Activated naive CD4-positive, alpha-beta T cell treated with anti-CD3 and anti-CD28 coated beads, Interleukin-2, amount 10 ng/mL, durations not matched to agents 7 days and 5 days (primary cell): ENCODE measurements at regions of chr1 and their contacts with region 1.

Region 1: DNA sequence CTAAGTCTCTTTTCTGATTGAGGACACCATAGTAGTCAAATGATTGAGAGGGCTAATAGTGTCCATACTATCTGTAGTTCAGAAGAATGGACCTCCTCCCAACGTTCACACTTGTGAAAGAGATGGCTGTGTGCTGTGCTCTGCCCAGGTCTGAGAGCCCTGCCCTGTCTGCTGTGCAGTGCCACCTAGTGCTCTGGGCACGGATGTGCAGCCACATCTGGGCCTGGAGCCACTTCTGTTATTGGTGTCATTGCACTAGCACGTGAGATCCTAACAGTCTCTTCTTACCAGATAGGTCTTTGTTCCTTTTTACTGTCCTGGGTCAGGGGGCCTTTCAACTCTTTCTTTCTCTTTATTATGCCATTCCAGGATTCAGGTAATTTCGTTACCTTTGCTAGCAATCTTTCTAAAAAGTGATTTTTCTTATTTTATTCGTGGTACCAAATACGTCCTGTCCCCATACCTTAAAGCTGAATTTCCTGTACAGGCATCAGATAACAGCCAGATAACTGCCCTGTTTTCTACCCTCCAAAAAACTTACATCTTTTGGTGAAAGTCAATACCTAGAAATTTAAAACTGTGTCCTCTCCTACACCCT is 21.7 kb downstream of the INTS3 start:
- DNase-seq: peak; percentile 86
- H3K4me3 Mint-ChIP-seq: no peak overlapping the region
- H3K27ac Mint-ChIP-seq: no peak overlapping the region
- H3K4me1 Mint-ChIP-seq: peaks cover 5% of the 10 kb centered on the region
- H3K27me3 Mint-ChIP-seq: no peaks in the 10 kb centered on the region

Region 2: DNA sequence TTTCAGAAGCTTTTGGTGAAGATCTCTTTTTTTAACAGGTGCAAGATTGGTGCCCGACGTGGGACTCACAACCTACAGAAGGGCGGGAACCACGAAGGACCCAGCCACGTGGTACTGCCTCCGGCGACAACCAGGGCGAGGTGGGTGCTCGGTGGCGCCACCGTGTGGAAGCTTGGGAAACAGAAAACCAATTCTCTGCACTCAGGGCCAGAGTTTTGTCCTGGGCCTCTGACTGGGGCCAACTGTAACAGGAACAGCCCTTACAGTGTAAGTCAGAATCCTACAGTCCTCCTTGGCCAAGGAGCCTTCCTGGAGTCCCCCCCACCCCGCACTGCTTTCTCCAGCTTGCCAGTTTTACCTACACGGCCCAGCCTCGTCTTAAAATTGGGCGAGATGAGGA is 344.7 kb before region 1 on chr1:
- CTCF ChIA-PET with region 1: no interaction called
- DNase-seq: peak; percentile 65
- H3K4me3 Mint-ChIP-seq: no peak overlapping the region
- H3K27ac Mint-ChIP-seq: no peak overlapping the region
- H3K4me1 Mint-ChIP-seq: peaks cover 16% of the 10 kb centered on the region
- H3K27me3 Mint-ChIP-seq: peaks cover 21% of the 10 kb centered on the region

Region 3: GRCh38 chr1:153677718-153678505 is 71.6 kb before region 1 on chr1:
- CTCF ChIA-PET with region 1: interaction called, 27 read pairs
- DNase-seq: peak; percentile 66
- H3K4me3 Mint-ChIP-seq: peak overlapping the region; percentile 78
- H3K27ac Mint-ChIP-seq: no peak overlapping the region
- H3K4me1 Mint-ChIP-seq: peaks cover 27% of the 10 kb centered on the region
- H3K27me3 Mint-ChIP-seq: peaks cover 59% of the 10 kb centered on the region

Region 4: GRCh38 chr1:153783233-153784190 is 34.0 kb after region 1 on chr1:
- CTCF ChIA-PET with region 1: no interaction called
- DNase-seq: peak; percentile 94
- H3K4me3 Mint-ChIP-seq: peak overlapping the region; percentile 91
- H3K27ac Mint-ChIP-seq: peak overlapping the region; percentile 96
- H3K4me1 Mint-ChIP-seq: peaks cover 14% of the 10 kb centered on the region
- H3K27me3 Mint-ChIP-seq: peaks cover 23% of the 10 kb centered on the region

Region 5: GRCh38 chr1:153796791-153797659 is 47.5 kb after region 1 on chr1:
- CTCF ChIA-PET with region 1: no interaction called
- DNase-seq: peak; percentile 91
- H3K4me3 Mint-ChIP-seq: no peak overlapping the region
- H3K27ac Mint-ChIP-seq: no peak overlapping the region
- H3K4me1 Mint-ChIP-seq: peaks cover 37% of the 10 kb centered on the region
- H3K27me3 Mint-ChIP-seq: peaks cover 12% of the 10 kb centered on the region

Region 6: DNA sequence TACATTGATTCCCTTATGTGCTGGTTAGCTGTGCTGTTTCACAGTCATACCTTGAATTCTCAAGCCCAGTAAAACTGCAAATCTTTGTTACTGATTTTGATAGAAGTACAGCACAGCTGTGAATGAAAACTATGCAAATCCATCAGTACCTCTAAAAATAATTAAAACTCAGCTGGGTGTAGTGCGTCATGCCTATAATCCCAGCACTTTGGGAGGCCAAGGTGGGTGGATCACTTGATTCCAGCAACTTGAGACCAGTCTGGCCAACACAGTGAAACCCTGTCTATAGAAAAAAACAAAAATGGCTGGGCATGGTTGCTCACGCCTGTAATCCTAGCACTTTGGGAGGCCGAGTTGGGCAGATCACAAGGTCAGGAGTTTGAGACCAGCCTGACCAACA is 344.2 kb after region 1 on chr1:
- CTCF ChIA-PET with region 1: no interaction called
- DNase-seq: no peak
- H3K4me3 Mint-ChIP-seq: no peak overlapping the region
- H3K27ac Mint-ChIP-seq: no peak overlapping the region
- H3K4me1 Mint-ChIP-seq: no peaks in the 10 kb centered on the region
- H3K27me3 Mint-ChIP-seq: no peaks in the 10 kb centered on the region